CD14-positive monocyte (primary cell): ENCODE measurements at regions of chr3 and their contacts with region 1.

Region 1: DNA sequence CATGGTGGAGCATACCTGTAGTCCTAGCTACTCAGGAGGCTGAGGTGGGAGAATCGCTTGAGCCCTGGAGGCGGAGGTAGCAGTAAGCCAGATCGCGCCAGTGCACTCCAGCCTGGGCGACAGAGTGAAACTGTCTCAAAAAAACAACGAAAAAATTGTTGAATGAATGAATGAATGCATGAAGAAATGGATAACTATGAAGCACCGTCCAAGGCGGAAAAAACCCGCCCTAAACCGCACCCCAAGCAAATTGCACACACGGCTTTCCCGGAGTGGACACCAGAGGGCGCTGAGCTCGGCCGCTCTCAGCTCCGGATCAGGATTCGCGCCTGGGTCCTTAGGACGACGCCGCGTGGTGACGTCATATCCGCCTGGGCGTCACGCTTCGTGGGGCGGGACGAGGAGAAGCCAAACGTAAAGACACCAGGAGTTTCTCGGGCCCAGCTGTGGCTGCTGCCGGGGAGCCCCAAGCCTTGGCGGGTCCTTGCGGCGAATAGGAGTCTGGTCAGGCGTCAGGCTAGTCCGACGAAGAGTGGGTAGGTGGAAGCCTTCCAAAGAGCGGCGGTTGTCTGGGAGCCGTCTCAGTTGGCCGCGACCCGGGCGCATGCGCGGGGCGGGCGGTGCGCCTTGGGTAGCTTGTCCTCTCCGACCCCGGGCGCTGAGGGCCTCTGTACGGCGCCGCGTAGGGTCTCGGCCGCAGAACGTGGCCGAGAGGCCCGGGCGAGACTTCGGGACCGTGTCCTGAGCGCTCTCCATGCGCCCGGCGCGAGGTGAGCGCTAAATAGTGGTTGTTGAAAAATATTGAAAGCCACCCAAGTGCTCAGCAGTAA is at the starts of genes HTD2 and RPP14:
- DNase-seq: peak; percentile 97 to 99 (median 98)
- H3K4me3 ChIP-seq: peak within 1 kb of the TSS; percentile 80 to 88 (median 87)
- H3K4me3 Mint-ChIP-seq: peak within 1 kb of the TSS; percentile 94 to 98
- H3K27ac ChIP-seq: peak within 1 kb of the TSS; percentile 81 to 93
- H3K27ac Mint-ChIP-seq: peak within 1 kb of the TSS; percentile 98 to 100 (median 100)
- H3K4me1 ChIP-seq: peaks cover 18 to 23% of the 10 kb centered on the region in 2 donors
- H3K4me1 Mint-ChIP-seq: peaks cover 27% of the 10 kb centered on the region
- H3K27me3 ChIP-seq: no peaks in the 10 kb centered on the region
- H3K27me3 Mint-ChIP-seq: peaks cover 7 to 12% (median 8%) of the 10 kb centered on the region in 3 donors
- CTCF ChIP-seq: peak; percentile 89
- polyA plus RNA-seq, gene HTD2: 4.5 to 17.3 (median 10.5) TPM
- polyA plus RNA-seq, gene RPP14: 3.5 to 8.8 (median 6.6) TPM

Region 2: GRCh38 chr3:58398669-58399333 is 92.7 kb after region 1 on chr3:
- intact Hi-C with region 1: loop called in 1 of 2 experiments (anchors 5 kb)
- DNase-seq: no peak
- H3K4me3 ChIP-seq: no peak overlapping the region
- H3K4me3 Mint-ChIP-seq: no peak overlapping the region
- H3K27ac ChIP-seq: no peak overlapping the region
- H3K27ac Mint-ChIP-seq: no peak overlapping the region
- H3K4me1 ChIP-seq: no peaks in the 10 kb centered on the region
- H3K4me1 Mint-ChIP-seq: no peaks in the 10 kb centered on the region
- H3K27me3 ChIP-seq: no peaks in the 10 kb centered on the region
- H3K27me3 Mint-ChIP-seq: no peaks in the 10 kb centered on the region
- CTCF ChIP-seq: no peak

Region 3: GRCh38 chr3:58414538-58415197 is 108.6 kb after region 1 on chr3:
- intact Hi-C with region 1: loop called (anchors 1 to 5 kb)
- DNase-seq: peak; percentile 46 to 58 (median 47)
- H3K4me3 ChIP-seq: no peak overlapping the region
- H3K4me3 Mint-ChIP-seq: no peak overlapping the region
- H3K27ac ChIP-seq: peak overlapping the region in 1 of 2 donors; percentile 53
- H3K27ac Mint-ChIP-seq: peak overlapping the region in 2 of 7 donors; percentile 3 to 82
- H3K4me1 ChIP-seq: peaks cover 0 to 3% of the 10 kb centered on the region in 2 donors
- H3K4me1 Mint-ChIP-seq: peaks cover 11% of the 10 kb centered on the region
- H3K27me3 ChIP-seq: no peaks in the 10 kb centered on the region
- H3K27me3 Mint-ChIP-seq: peaks cover 0 to 1% (median 0%) of the 10 kb centered on the region in 3 donors
- CTCF ChIP-seq: peak; percentile 74

Region 4: DNA sequence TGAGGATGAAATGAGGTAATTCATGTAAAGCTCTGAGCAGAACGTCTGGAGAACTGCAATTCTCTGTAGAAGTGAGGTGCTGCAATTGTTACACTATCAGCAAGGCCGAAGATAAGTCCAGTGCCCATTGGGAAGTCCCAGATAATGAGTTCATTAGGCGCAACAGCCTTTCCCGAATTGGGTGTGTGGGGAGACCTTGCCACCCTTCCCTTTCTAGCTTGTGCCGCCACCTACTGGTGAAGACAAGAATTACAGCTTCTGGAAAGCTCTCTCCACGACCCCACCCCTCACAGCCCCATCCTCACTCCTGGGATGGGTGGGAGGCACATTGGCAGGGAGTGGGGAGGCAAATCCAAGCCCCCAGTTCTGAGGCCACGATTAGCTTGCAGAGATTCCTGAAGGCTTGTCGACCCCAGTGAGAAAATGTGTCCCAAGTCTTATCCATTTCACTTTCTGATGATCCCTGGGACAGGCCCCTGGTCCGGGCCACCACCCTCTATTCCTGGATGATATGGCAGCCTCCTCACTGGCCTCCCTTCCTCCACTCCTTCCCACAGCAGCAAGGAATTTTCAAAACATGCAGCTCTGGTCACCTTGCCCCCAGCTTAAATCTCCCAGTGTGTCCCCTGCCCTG is 324.1 kb after region 1 on chr3:
- intact Hi-C with region 1: loop called (anchors 5 to 10 kb)
- DNase-seq: peak; percentile 25 to 65 (median 52)
- H3K4me3 ChIP-seq: no peak overlapping the region
- H3K4me3 Mint-ChIP-seq: no peak overlapping the region
- H3K27ac ChIP-seq: no peak overlapping the region
- H3K27ac Mint-ChIP-seq: no peak overlapping the region
- H3K4me1 ChIP-seq: no peaks in the 10 kb centered on the region
- H3K4me1 Mint-ChIP-seq: no peaks in the 10 kb centered on the region
- H3K27me3 ChIP-seq: no peaks in the 10 kb centered on the region
- H3K27me3 Mint-ChIP-seq: peaks cover 3 to 5% (median 4%) of the 10 kb centered on the region in 3 donors
- CTCF ChIP-seq: peak; percentile 95